CD8-positive, alpha-beta T cell (primary cell): ENCODE measurements at regions of chr2 and their contacts with region 1.

Region 1: DNA sequence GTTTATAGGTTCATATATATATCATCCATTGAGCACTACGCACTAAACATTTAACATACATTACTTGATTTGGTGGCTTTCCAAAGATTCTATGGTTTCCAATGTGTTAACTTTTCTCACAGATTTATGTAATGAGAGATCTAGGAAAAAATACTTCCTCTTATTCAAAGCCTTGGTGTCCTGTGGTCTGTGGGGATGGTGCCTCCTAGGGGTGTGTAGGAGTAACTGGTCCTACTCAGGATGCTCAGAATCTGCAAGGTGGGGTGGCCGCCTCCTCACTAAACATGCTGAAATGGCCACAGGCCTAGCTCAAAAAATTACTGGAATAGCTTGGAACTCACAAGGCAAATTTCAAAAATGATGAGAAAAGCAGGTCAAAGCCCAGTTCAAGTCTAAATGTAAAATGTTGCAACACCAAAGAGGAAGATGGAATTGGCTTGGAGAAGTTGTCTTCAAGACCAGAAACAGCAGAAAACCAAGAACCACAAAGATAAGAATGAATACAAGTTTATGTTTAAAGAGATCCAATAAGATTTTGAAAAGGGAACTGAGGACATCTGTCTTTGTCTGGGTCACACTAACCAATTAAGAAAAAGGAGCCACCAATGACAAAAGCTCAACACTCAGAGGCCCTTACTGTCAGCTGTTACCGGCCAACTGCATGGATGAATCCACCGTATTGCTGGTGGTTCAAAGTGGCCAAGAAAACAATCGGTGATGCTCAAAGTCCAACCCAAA is 11.5 kb downstream of the GPR55 start:
- DNase-seq: peak in 3 of 9 experiments; percentile 49 to 71 (median 59)
- ATAC-seq: peak; percentile 76
- H3K4me3 ChIP-seq: no peak overlapping the region
- H3K4me3 Mint-ChIP-seq: no peak overlapping the region
- H3K27ac ChIP-seq: no peak overlapping the region
- H3K27ac Mint-ChIP-seq: no peak overlapping the region
- H3K4me1 ChIP-seq: peaks cover 2% of the 10 kb centered on the region
- H3K4me1 Mint-ChIP-seq: peaks cover 38% of the 10 kb centered on the region
- H3K27me3 ChIP-seq: peaks cover 0 to under 1% of the 10 kb centered on the region in 2 experiments
- H3K27me3 Mint-ChIP-seq: peaks cover 2% of the 10 kb centered on the region
- CTCF ChIP-seq: peak; percentile 41

Region 2: GRCh38 chr2:229852565-229852964 is 1061.0 kb before region 1 on chr2:
- CTCF ChIA-PET with region 1: no interaction called
- POLR2A ChIA-PET with region 1: no interaction called
- intact Hi-C with region 1: no loop called
- DNase-seq: peak; percentile 16 to 75 (median 63)
- ATAC-seq: peak; percentile 92
- H3K4me3 ChIP-seq: no peak overlapping the region
- H3K4me3 Mint-ChIP-seq: peak overlapping the region; percentile 33
- H3K27ac ChIP-seq: peak overlapping the region; percentile 0 to 28
- H3K27ac Mint-ChIP-seq: peak overlapping the region; percentile 87
- H3K4me1 ChIP-seq: peaks cover 34% of the 10 kb centered on the region
- H3K4me1 Mint-ChIP-seq: peaks cover 73% of the 10 kb centered on the region
- H3K27me3 ChIP-seq: no peaks in the 10 kb centered on the region
- H3K27me3 Mint-ChIP-seq: no peaks in the 10 kb centered on the region
- CTCF ChIP-seq: no peak

Region 3: GRCh38 chr2:230847883-230848388 is 65.6 kb before region 1 on chr2:
- CTCF ChIA-PET with region 1: interaction called, 25 read pairs
- POLR2A ChIA-PET with region 1: no interaction called
- intact Hi-C with region 1: loop called (anchors 1 to 5 kb)
- DNase-seq: peak; percentile 73 to 94 (median 87)
- ATAC-seq: peak; percentile 91
- H3K4me3 ChIP-seq: no peak overlapping the region
- H3K4me3 Mint-ChIP-seq: no peak overlapping the region
- H3K27ac ChIP-seq: no peak overlapping the region
- H3K27ac Mint-ChIP-seq: no peak overlapping the region
- H3K4me1 ChIP-seq: peaks cover 8% of the 10 kb centered on the region
- H3K4me1 Mint-ChIP-seq: peaks cover 6% of the 10 kb centered on the region
- H3K27me3 ChIP-seq: peaks cover 0 to 9% of the 10 kb centered on the region in 2 experiments
- H3K27me3 Mint-ChIP-seq: peaks cover 14% of the 10 kb centered on the region
- CTCF ChIP-seq: peak; percentile 82

Region 4: GRCh38 chr2:230902180-230902899 is 11.2 kb before region 1 on chr2:
- CTCF ChIA-PET with region 1: interaction called, 8 read pairs
- POLR2A ChIA-PET with region 1: no interaction called
- intact Hi-C with region 1: loop called in 1 of 2 experiments (anchors 1 kb)
- DNase-seq: peak in 7 of 9 experiments; percentile 40 to 78 (median 60)
- ATAC-seq: no peak
- H3K4me3 ChIP-seq: no peak overlapping the region
- H3K4me3 Mint-ChIP-seq: no peak overlapping the region
- H3K27ac ChIP-seq: no peak overlapping the region
- H3K27ac Mint-ChIP-seq: no peak overlapping the region
- H3K4me1 ChIP-seq: peaks cover 24% of the 10 kb centered on the region
- H3K4me1 Mint-ChIP-seq: peaks cover 34% of the 10 kb centered on the region
- H3K27me3 ChIP-seq: no peaks in the 10 kb centered on the region
- H3K27me3 Mint-ChIP-seq: no peaks in the 10 kb centered on the region
- CTCF ChIP-seq: peak; percentile 84